HAP-1 (cell line): ENCODE measurements at regions of chr16 and their contacts with region 1.

Region 1: DNA sequence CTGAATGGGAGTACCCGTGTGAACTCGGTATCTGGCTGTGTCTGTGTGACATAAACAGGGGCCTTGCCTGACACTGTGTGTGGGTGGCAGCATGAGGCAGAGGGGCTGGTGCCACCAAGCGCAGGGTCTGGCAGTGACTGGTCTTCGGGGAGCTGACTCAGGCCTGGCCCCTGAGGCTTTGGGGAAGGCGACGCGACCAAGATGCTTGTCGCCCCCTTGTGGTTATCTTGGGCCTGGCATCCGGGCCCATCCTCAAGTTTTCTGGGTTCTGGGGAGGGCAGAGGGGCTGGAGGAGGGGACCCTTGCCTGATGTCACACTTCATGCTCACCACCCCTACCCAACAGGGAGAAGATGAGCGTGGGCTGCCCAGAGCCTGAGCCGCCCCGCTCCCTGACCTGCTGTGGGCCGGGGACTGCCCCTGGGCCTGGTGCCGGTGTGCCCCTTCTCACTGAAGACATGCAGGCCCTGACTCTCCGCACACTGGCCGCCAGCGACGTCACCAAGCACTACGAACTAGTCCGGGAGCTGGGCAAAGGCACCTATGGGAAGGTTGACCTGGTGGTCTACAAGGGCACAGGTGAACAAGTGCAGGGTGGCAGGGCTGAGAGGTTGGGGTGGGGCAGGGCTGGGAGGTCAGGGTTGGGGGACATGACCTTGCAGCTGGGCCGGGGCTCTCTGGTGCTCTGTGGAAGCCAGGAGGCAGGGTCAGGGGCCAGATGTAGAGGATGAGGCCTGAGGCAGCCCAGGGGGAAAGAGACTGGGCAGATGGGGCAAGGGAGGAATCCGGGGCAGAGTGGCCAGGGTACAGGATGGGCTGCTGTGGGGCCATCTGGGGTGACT is 24.9 kb downstream of the SBK1 start:
- DNase-seq: peak; percentile 40 to 80
- H3K4me3 ChIP-seq: no peak overlapping the region
- H3K4me1 ChIP-seq: no peaks in the 10 kb centered on the region
- H3K27me3 ChIP-seq: no peaks in the 10 kb centered on the region

Region 2: GRCh38 chr16:27951489-27952120 is 365.7 kb before region 1 on chr16:
- in situ Hi-C with region 1: no loop called
- DNase-seq: no peak
- H3K4me3 ChIP-seq: no peak overlapping the region
- H3K4me1 ChIP-seq: no peaks in the 10 kb centered on the region
- H3K27me3 ChIP-seq: peaks cover 4% of the 10 kb centered on the region; the same call in 1 of the 2 replicates

Region 3: DNA sequence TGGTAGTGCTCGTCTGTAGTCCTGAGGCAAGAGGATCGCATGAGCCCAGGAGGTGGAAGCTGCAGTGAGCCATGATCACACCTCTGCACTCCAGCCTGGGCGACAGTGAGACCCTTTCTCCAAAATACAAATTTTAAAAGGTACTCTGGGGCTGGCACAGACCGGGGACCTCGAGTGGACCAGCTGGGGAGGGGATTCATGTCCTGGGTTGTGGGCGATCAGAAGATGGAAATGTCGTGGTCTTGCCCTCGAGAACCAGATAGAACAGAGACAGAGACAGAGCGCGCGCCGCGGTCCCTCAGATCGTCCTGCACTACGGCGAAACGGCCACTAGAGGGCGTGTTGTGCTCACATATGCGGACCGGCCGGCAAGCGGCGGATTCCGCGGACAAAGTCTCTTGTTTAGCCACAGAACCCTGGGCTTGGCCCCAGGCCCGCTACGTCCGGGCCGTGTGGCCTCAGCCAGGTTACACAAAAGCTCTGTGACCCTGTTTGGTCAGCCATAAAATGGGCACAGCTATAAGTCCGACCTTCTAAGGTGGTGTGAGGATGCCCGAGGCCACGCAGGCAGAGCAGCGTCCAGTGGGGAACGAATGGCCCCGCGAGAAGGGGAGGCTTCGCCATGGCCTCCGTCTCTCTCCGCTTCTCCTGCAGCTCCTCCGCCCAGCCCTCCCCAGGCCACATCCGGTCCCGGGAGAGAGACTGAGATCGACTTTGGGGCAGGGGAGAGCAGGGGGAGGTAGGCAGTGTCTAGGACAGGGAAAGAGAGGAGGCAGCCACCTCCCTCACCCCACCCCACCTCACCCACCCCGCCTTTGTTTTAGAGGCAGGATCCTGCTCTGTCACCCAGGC is 39.5 kb before region 1 on chr16:
- in situ Hi-C with region 1: loop called (anchors 5 kb)
- DNase-seq: peak; percentile 76 to 91
- H3K4me3 ChIP-seq: peak overlapping the region; percentile 19
- H3K4me1 ChIP-seq: peaks cover 3% of the 10 kb centered on the region
- H3K27me3 ChIP-seq: peaks cover 6% of the 10 kb centered on the region; the same call in 1 of the 2 replicates

Region 4: DNA sequence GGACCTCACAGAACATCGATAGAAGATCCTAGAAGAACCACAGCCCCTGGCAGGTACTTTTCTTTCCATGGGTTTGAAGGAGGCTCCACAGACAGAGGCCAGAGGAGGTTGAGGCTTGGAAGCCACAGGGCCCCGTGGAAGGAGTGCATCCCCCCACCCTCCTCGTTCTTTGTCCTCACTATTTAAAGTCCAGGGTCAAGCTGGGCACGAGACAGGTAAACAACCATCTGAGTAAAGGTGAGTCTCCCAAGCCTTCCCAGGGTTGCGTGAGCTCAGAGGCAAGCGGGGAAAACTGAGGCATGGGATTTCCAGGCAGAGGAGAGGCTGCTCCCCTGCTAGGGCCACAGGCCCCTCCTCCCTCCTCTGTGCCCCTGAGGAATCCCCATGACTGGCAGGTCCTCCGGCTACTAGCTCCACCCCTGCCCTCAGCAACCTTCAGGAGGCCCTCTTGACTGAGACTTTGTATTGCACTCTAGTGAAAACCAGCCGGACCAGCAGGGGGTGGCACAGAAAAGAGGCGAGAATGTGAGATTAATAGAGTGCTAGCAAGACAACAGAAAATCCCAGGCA is 280.5 kb after region 1 on chr16:
- in situ Hi-C with region 1: loop called (anchors 25 kb)
- DNase-seq: peak; percentile 54 to 79
- H3K4me3 ChIP-seq: no peak overlapping the region
- H3K4me1 ChIP-seq: no peaks in the 10 kb centered on the region
- H3K27me3 ChIP-seq: no peaks in the 10 kb centered on the region

Region 5: DNA sequence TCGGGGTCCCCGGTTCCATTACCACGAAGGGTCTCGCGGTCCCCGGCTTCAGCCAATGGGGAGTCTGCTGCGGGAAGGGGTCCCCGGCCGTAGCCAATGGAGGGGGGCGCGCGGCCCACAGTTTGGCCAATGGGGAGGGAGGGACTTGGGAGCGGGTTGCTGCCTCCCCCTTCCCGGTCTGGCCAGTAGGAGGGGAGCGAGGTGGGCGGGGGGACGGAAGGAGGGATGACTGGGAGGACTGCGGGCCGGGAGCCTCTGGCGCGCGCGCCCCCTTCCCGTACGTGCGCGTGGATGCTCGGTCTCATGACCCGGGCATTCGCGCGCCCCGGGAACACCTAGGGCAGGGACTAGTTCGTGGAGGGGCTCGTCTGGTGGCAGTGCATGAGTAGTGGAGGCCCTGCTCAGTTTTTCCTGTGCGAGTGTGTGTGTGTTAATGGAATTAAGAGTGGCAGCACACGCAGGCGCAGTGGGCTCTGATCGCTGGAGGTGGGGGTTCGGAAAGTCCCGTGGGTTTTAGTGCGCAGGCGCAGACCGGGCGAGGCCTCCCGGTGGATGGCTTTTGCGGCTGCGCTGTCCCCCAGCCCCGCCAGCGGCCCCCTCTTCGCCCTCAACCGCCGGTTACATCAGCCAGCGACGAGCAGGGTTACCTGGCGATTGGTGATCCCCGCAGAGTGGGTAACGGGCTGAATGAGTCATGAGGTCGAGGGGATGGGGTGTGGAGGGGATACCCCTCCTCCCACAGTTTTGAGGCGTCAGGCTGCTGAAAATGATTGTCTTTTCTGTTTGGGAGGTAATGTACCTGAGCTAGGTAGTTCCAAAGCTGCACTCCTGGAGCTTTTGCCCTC is 506.8 kb after region 1 on chr16:
- in situ Hi-C with region 1: loop called (anchors 25 kb)
- DNase-seq: peak; percentile 98 to 99
- H3K4me3 ChIP-seq: peak overlapping the region; percentile 91
- H3K4me1 ChIP-seq: peaks cover 11% of the 10 kb centered on the region
- H3K27me3 ChIP-seq: no peaks in the 10 kb centered on the region